ENCODE measurements at regions of chr2 and their contacts with region 1.

Region 1: DNA sequence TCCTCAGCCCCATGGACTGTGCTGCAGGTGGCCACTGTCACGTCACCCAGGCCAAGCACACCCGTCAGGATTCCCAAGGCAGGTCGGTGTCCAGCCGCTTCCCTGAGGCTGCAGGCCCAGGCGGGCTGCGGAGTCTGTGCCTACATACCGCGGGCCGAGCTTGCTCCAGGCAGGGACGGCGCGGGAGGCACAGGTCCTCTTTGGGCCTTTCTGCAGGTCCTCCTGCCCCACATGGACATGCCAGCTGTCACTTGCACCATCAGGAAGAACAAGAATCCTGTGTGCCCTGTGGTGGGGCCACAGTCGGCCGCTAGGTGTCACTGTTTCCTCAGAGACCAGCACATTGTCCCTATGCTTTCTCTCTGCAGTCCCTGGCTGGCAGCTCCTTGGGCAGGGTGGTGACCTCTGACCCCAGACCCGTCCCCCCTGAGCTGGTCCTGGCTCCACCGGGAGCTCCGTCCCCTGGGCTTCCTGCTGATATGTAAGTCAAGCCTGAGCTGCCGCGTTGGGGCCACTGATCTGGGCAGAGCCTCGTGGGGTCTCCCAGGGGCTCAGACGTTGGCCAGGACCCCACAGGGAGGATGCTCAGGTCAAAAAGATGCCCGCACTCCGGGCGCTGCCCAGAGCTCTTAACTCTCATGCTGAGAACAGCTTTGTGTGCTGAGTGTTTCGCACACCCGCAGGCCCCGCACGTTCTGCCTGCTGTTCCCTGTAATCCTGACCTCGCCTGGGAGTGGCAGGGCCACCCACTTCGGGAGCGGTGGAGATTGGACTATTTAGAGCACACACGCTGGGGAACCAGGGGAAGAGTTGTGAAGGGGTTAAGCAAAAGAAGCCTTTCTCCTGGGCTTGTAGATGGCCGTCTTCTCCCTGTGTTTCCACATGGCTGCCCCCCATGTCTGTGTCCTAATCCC is 17.3 kb upstream of the AGXT start:
- DNase-seq: peak; percentile 68
- H3K4me3 ChIP-seq: no peak overlapping the region
- H3K27ac ChIP-seq: no peak overlapping the region
- H3K4me1 ChIP-seq: no peaks in the 10 kb centered on the region
- CTCF ChIP-seq: peak; percentile 87

Region 2: GRCh38 chr2:240881913-240882312 is 30.6 kb after region 1 on chr2:
- CTCF ChIA-PET with region 1: no interaction called
- POLR2A ChIA-PET with region 1: no interaction called
- intact Hi-C with region 1: no loop called
- DNase-seq: no peak
- H3K4me3 ChIP-seq: no peak overlapping the region
- H3K27ac ChIP-seq: no peak overlapping the region
- H3K4me1 ChIP-seq: no peaks in the 10 kb centered on the region
- CTCF ChIP-seq: no peak

Region 3: DNA sequence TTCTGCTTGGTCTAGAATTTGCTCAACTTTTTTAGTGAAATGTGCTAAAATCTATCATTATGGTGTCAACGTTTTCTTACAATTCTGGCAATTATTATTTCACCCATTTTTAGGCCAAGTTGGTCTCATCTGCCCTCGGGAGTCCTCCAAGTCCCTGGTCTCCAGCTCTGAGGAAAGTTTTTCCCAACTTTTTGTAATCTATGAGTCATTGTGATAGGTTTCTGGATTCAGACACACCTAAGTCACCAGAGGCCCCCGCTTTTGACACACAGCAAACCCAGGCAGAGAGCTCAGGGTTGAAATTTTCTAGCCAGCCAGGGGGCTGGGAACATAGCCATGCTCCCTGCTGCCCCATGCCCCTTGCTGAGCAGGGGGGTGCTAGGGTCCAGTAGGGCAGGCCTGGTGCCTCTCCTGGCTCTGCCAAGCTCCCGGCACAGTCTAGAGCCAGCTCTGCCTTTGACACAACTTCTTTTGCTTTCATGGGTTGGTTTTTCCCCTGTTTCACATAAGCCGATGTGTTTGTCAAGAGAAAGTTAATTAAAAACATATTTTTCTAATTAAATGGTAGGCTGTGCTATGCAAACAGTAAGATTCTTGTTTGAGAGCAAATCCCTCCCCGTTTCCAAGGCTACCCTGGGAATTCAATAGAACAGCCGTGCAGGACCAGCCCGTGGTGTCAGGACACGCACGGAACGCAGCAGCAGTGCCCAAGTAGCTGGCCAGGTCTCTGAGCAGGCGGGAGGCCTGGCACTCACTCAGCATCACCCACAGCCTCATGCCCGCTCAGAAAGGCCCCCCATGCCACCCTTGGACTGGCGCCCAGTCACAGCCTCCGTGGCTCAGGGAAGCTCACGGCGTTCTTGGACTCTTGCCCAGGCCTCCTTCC is 121.5 kb after region 1 on chr2:
- CTCF ChIA-PET with region 1: no interaction called
- POLR2A ChIA-PET with region 1: no interaction called
- intact Hi-C with region 1: no loop called
- DNase-seq: no peak
- H3K4me3 ChIP-seq: no peak overlapping the region
- H3K27ac ChIP-seq: no peak overlapping the region
- H3K4me1 ChIP-seq: no peaks in the 10 kb centered on the region
- CTCF ChIP-seq: no peak

Region 4: DNA sequence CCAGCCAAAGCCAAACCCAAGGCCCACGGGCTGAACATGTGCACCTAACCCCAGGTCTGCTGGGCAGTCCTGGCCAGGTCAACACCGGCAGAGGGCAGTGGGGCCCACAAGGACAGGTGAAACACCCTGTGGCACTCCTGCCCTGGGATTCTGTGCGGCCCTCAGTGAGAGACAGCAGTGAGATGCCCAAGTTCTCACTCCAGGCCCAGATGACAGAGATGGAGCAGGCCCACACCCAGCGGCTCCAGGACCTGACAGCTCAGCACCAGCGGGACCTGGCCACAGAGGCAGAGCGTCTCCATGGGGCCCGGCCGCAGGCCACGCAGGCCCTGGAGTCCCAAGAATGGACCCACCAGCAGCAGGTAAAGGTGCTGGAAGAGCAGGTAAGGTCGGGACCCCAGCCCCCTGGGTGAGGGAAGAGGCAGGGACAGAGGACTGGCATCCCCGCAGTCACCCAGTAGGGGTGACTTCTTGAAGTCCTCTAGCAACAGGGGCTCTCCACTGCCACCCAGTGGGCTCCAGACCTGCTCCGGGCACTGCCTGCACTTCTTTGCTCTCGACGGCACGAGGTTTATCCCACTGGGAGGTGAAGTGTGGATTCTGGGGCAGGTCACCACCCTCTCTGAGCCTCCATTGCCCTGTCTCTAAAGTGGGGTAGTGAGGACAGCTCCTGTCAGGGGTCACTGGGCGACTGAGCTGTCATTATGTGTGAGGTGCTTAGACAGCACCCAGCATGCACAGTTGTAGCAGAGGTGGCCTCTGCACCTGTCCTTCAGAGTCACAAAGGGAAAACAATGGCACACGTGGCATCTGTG is 138.3 kb after region 1 on chr2:
- CTCF ChIA-PET with region 1: no interaction called
- POLR2A ChIA-PET with region 1: no interaction called
- intact Hi-C with region 1: loop called (anchors 2 kb)
- DNase-seq: peak; percentile 62
- H3K4me3 ChIP-seq: no peak overlapping the region
- H3K27ac ChIP-seq: no peak overlapping the region
- H3K4me1 ChIP-seq: peaks cover 13% of the 10 kb centered on the region
- CTCF ChIP-seq: peak; percentile 69